Transverse colon (tissue), 4 donors: ENCODE measurements at regions of chr9 and their contacts with region 1.

Region 1: GRCh38 chr9:108125625-108126024 is 636.1 kb upstream of the KLF4 start:
- DNase-seq: no peak
- H3K4me3 ChIP-seq: no peak overlapping the region
- H3K27ac ChIP-seq: no peak overlapping the region
- H3K4me1 ChIP-seq: no peaks in the 10 kb centered on the region
- H3K27me3 ChIP-seq: no peaks in the 10 kb centered on the region
- CTCF ChIP-seq: no peak
- EP300 ChIP-seq: no peak
- POLR2A ChIP-seq: no peak

Region 2: DNA sequence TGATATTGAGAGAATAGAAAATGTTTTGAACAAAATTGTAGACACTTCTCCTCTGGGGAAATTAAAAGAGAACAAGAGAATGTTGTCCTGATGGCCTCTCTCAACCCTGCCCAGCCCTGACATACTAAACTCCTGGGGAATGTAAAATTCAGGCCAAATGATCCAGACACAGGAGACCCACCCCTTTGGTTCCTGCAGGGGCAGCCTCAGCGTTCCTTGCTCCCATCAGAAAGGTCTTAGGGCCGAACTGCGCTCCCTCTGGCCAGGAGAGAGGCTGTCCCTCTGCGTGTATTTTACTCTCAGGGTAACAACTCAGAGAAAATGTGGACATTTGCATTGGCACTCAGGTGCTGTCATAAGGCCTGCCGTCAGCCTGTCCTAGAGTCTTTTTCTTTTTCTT is 19.7 kb before region 1 on chr9:
- in situ Hi-C with region 1: no loop called
- intact Hi-C with region 1: loop called (anchors 1 kb)
- DNase-seq: no peak
- H3K4me3 ChIP-seq: no peak overlapping the region
- H3K27ac ChIP-seq: no peak overlapping the region
- H3K4me1 ChIP-seq: peaks cover 0 to 10% (median 0%) of the 10 kb centered on the region in 4 donors
- H3K27me3 ChIP-seq: no peaks in the 10 kb centered on the region
- CTCF ChIP-seq: no peak
- EP300 ChIP-seq: no peak
- POLR2A ChIP-seq: no peak